ENCODE measurements at regions of chr3 and their contacts with region 1.

Region 1: GRCh38 chr3:99108508-99108907 is 207.0 kb upstream of the DCBLD2 start:
- DNase-seq: no peak
- ATAC-seq: no peak
- H3K4me3 ChIP-seq: no peak overlapping the region
- H3K4me3 Mint-ChIP-seq: no peak overlapping the region
- H3K27ac ChIP-seq: no peak overlapping the region
- H3K27ac Mint-ChIP-seq: no peak overlapping the region
- H3K4me1 ChIP-seq: no peaks in the 10 kb centered on the region
- H3K4me1 Mint-ChIP-seq: no peaks in the 10 kb centered on the region
- H3K27me3 ChIP-seq: no peaks in the 10 kb centered on the region
- H3K27me3 Mint-ChIP-seq: peaks cover 0 to 10% (median 8%) of the 10 kb centered on the region in 5 donors

Region 2: DNA sequence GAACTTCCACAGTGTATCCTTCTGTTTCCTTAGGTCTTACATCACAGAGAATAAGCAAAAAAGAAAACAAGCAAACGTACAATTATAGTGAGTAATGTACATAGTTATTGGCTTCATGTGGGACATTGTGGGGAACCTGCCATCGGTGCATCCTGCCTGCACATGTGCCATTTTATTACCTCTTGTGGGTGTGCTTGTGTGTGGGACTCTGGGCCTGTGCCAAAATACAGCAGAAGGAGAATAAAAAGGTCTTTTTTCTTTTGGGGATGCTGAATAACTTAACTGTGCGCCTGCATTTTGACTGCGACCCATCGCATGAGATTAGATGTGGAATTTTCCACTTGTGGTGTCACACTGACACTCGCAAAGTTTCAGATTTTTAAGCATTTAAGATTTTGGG is 37.4 kb before region 1 on chr3:
- CTCF ChIA-PET with region 1: no interaction called
- POLR2A ChIA-PET with region 1: no interaction called
- intact Hi-C with region 1: loop called in 1 of 2 experiments (anchors 1 kb)
- DNase-seq: no peak
- ATAC-seq: no peak
- H3K4me3 ChIP-seq: no peak overlapping the region
- H3K4me3 Mint-ChIP-seq: no peak overlapping the region
- H3K27ac ChIP-seq: no peak overlapping the region
- H3K27ac Mint-ChIP-seq: no peak overlapping the region
- H3K4me1 ChIP-seq: no peaks in the 10 kb centered on the region
- H3K4me1 Mint-ChIP-seq: no peaks in the 10 kb centered on the region
- H3K27me3 ChIP-seq: no peaks in the 10 kb centered on the region
- H3K27me3 Mint-ChIP-seq: peaks cover 0 to 22% (median 12%) of the 10 kb centered on the region in 5 donors

Region 3: GRCh38 chr3:99145031-99145430 is 36.5 kb after region 1 on chr3:
- CTCF ChIA-PET with region 1: no interaction called
- POLR2A ChIA-PET with region 1: no interaction called
- intact Hi-C with region 1: no loop called
- DNase-seq: no peak
- ATAC-seq: no peak
- H3K4me3 ChIP-seq: no peak overlapping the region
- H3K4me3 Mint-ChIP-seq: no peak overlapping the region
- H3K27ac ChIP-seq: no peak overlapping the region
- H3K27ac Mint-ChIP-seq: no peak overlapping the region
- H3K4me1 ChIP-seq: no peaks in the 10 kb centered on the region
- H3K4me1 Mint-ChIP-seq: no peaks in the 10 kb centered on the region
- H3K27me3 ChIP-seq: no peaks in the 10 kb centered on the region
- H3K27me3 Mint-ChIP-seq: peaks cover 0 to 9% (median 0%) of the 10 kb centered on the region in 5 donors

Region 4: GRCh38 chr3:99186016-99186415 is 77.5 kb after region 1 on chr3:
- CTCF ChIA-PET with region 1: no interaction called
- POLR2A ChIA-PET with region 1: no interaction called
- intact Hi-C with region 1: no loop called
- DNase-seq: no peak
- ATAC-seq: no peak
- H3K4me3 ChIP-seq: no peak overlapping the region
- H3K4me3 Mint-ChIP-seq: no peak overlapping the region
- H3K27ac ChIP-seq: no peak overlapping the region
- H3K27ac Mint-ChIP-seq: no peak overlapping the region
- H3K4me1 ChIP-seq: no peaks in the 10 kb centered on the region
- H3K4me1 Mint-ChIP-seq: no peaks in the 10 kb centered on the region
- H3K27me3 ChIP-seq: no peaks in the 10 kb centered on the region
- H3K27me3 Mint-ChIP-seq: no peaks in the 10 kb centered on the region

Region 5: GRCh38 chr3:100144251-100144866 is 1035.9 kb after region 1 on chr3:
- CTCF ChIA-PET with region 1: no interaction called
- POLR2A ChIA-PET with region 1: no interaction called
- intact Hi-C with region 1: no loop called
- DNase-seq: no peak
- ATAC-seq: no peak
- H3K4me3 ChIP-seq: no peak overlapping the region
- H3K4me3 Mint-ChIP-seq: peak overlapping the region in 1 of 10 donors; percentile 23
- H3K27ac ChIP-seq: no peak overlapping the region
- H3K27ac Mint-ChIP-seq: peak overlapping the region in 1 of 9 donors; percentile 64
- H3K4me1 ChIP-seq: no peaks in the 10 kb centered on the region
- H3K4me1 Mint-ChIP-seq: peaks cover 0 to 25% (median 0%) of the 10 kb centered on the region in 7 donors
- H3K27me3 ChIP-seq: no peaks in the 10 kb centered on the region
- H3K27me3 Mint-ChIP-seq: no peaks in the 10 kb centered on the region

Measured in naive thymus-derived CD4-positive, alpha-beta T cell (primary cell).